ENCODE measurements at regions of chr12 and their contacts with region 1.

Region 1: GRCh38 chr12:54497883-54498282 is 331 bp downstream of the NCKAP1L start:
- DNase-seq: no peak
- H3K4me3 ChIP-seq: peak overlapping the region; percentile 76
- H3K27ac ChIP-seq: peak overlapping the region; percentile 85
- H3K4me1 ChIP-seq: peaks cover 40% of the 10 kb centered on the region
- CTCF ChIP-seq: no peak

Region 2: GRCh38 chr12:54475537-54475936 is 22.3 kb before region 1 on chr12:
- CTCF ChIA-PET with region 1: no interaction called
- POLR2A ChIA-PET with region 1: interaction called, 25 read pairs
- intact Hi-C with region 1: loop called (anchors 2 kb)
- DNase-seq: no peak
- H3K4me3 ChIP-seq: no peak overlapping the region
- H3K27ac ChIP-seq: no peak overlapping the region
- H3K4me1 ChIP-seq: peaks cover 31% of the 10 kb centered on the region
- CTCF ChIP-seq: no peak

Measured in OCI-LY7 (cell line).